Activated CD8-positive, alpha-beta memory T cell treated with anti-CD3 and anti-CD28 coated beads, Interleukin-2, amount 10 ng/mL, durations not matched to agents 7 days and 5 days (primary cell): ENCODE measurements at regions of chr20 and their contacts with region 1.

Region 1: GRCh38 chr20:36645998-36646397 is at the start of gene SLA2:
- DNase-seq: peak; percentile 91
- ATAC-seq: peak; percentile 76
- H3K4me3 Mint-ChIP-seq: peak within 1 kb of the TSS; percentile 96
- H3K27ac Mint-ChIP-seq: peak within 1 kb of the TSS; percentile 98
- H3K4me1 Mint-ChIP-seq: peaks cover 40% of the 10 kb centered on the region
- H3K27me3 Mint-ChIP-seq: no peaks in the 10 kb centered on the region
- total RNA-seq, gene SLA2: 109 to 140 TPM

Region 2: GRCh38 chr20:36481381-36482043 is 164.5 kb before region 1 on chr20:
- CTCF ChIA-PET with region 1: no interaction called
- DNase-seq: no peak
- ATAC-seq: peak; percentile 20
- H3K4me3 Mint-ChIP-seq: no peak overlapping the region
- H3K27ac Mint-ChIP-seq: no peak overlapping the region
- H3K4me1 Mint-ChIP-seq: no peaks in the 10 kb centered on the region
- H3K27me3 Mint-ChIP-seq: no peaks in the 10 kb centered on the region

Region 3: GRCh38 chr20:36629719-36630681 is 16.0 kb before region 1 on chr20:
- CTCF ChIA-PET with region 1: interaction called, 10 read pairs
- DNase-seq: peak; percentile 83
- ATAC-seq: peak; percentile 89
- H3K4me3 Mint-ChIP-seq: peak overlapping the region; percentile 64
- H3K27ac Mint-ChIP-seq: peak overlapping the region; percentile 96
- H3K4me1 Mint-ChIP-seq: peaks cover 64% of the 10 kb centered on the region
- H3K27me3 Mint-ChIP-seq: no peaks in the 10 kb centered on the region

Region 4: GRCh38 chr20:36666181-36666740 is 20.3 kb after region 1 on chr20:
- CTCF ChIA-PET with region 1: interaction called, 14 read pairs
- DNase-seq: no peak
- ATAC-seq: peak; percentile 51
- H3K4me3 Mint-ChIP-seq: no peak overlapping the region
- H3K27ac Mint-ChIP-seq: no peak overlapping the region
- H3K4me1 Mint-ChIP-seq: no peaks in the 10 kb centered on the region
- H3K27me3 Mint-ChIP-seq: no peaks in the 10 kb centered on the region

Region 5: DNA sequence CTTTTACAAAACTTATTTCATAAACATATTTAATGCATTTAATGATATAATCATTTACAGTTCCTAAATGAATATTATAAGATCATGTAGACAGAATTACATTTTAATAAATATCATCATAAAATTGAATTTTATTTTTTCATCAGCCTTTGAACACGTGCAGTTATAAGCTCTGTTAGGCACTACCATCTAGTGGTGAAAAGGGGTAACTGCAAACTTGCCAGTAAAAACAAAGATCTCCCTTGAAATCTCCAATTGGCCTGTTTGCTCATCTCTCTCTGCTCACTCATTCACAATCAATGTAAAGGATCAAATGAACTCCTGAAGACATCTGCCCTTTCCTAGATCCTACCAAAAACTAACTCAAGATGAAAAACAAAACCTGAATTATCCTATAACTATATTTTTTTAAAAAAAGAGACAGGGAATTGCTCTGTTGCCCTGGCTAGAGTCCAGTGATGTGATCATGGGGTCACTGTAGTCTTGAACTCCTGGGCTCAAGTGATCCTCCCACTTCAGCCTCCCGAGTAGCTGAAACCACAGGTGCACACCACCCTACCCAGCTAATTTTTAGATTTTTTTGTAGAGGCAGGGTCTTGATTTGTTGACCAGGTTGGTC is 273.8 kb after region 1 on chr20:
- CTCF ChIA-PET with region 1: no interaction called
- DNase-seq: no peak
- ATAC-seq: peak; percentile 66
- H3K4me3 Mint-ChIP-seq: no peak overlapping the region
- H3K27ac Mint-ChIP-seq: peak overlapping the region; percentile 39
- H3K4me1 Mint-ChIP-seq: peaks cover 7% of the 10 kb centered on the region
- H3K27me3 Mint-ChIP-seq: no peaks in the 10 kb centered on the region